CD4-positive, alpha-beta memory T cell (primary cell): ENCODE measurements at regions of chr4 and their contacts with region 1.

Region 1: GRCh38 chr4:70133491-70133890 is 20.5 kb upstream of the PRR27 start:
- DNase-seq: no peak
- H3K4me3 ChIP-seq: no peak overlapping the region
- H3K4me3 Mint-ChIP-seq: no peak overlapping the region
- H3K27ac ChIP-seq: no peak overlapping the region
- H3K27ac Mint-ChIP-seq: no peak overlapping the region
- H3K4me1 ChIP-seq: no peaks in the 10 kb centered on the region
- H3K4me1 Mint-ChIP-seq: no peaks in the 10 kb centered on the region
- H3K27me3 ChIP-seq: no peaks in the 10 kb centered on the region
- H3K27me3 Mint-ChIP-seq: no peaks in the 10 kb centered on the region

Region 2: GRCh38 chr4:70183168-70183939 is 49.9 kb after region 1 on chr4:
- CTCF ChIA-PET with region 1: no interaction called
- POLR2A ChIA-PET with region 1: no interaction called
- intact Hi-C with region 1: loop called (anchors 2 kb)
- DNase-seq: peak in 1 of 5 donors; percentile 18
- H3K4me3 ChIP-seq: no peak overlapping the region
- H3K4me3 Mint-ChIP-seq: no peak overlapping the region
- H3K27ac ChIP-seq: no peak overlapping the region
- H3K27ac Mint-ChIP-seq: no peak overlapping the region
- H3K4me1 ChIP-seq: no peaks in the 10 kb centered on the region
- H3K4me1 Mint-ChIP-seq: no peaks in the 10 kb centered on the region
- H3K27me3 ChIP-seq: no peaks in the 10 kb centered on the region
- H3K27me3 Mint-ChIP-seq: no peaks in the 10 kb centered on the region